ENCODE measurements at regions of chr10 and their contacts with region 1.

Region 1: DNA sequence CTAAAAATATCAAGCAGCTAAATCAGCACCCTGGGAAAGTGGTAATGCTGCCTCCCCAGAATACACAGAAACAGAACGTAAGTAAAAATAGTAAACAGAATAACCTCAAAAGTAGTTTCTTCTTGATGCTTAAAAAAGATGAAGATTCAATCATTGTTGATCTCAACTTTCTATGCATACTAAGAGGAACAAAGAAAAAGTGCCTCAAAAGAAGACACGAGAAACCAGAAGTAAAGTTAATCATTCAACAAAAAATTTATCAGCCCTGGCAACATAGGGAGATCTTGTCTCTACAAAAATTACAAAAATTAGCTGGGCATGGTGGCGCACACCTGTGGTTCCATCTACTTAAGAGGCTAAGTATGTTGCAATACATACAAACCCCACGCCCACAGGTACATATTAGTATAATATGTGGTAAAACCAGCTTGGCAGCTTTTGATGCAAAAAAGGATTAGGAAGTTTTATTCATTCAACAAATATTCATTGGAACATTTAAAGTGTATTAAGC is 153.7 kb downstream of the NRBF2 start:
- DNase-seq: no peak
- ATAC-seq: no peak
- H3K4me3 ChIP-seq: no peak overlapping the region
- H3K4me3 Mint-ChIP-seq: no peak overlapping the region
- H3K27ac ChIP-seq: no peak overlapping the region
- H3K27ac Mint-ChIP-seq: peak overlapping the region in 1 of 9 donors; percentile 10
- H3K4me1 ChIP-seq: no peaks in the 10 kb centered on the region
- H3K4me1 Mint-ChIP-seq: peaks cover 0 to 35% (median 17%) of the 10 kb centered on the region in 7 donors
- H3K27me3 ChIP-seq: no peaks in the 10 kb centered on the region
- H3K27me3 Mint-ChIP-seq: no peaks in the 10 kb centered on the region

Region 2: DNA sequence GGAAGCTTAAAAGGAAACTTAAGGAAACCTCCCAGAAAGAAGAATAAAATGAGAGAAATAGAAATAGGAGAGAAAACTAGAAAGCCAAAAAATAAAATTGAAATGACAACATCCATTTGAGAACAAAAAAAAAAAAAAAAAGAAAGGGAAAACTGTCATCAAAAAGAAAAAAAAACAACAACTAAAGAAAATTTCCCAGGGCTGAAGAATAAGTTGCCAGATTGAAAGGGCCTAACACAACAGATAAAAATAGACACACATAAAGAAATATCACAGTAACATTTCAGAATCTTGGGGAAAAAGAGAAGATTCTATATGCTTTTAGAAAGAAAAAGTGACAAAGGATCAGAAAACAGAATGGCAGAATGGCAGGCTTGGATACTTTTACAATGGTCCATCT is 21.8 kb after region 1 on chr10:
- CTCF ChIA-PET with region 1: no interaction called
- POLR2A ChIA-PET with region 1: no interaction called
- intact Hi-C with region 1: loop called in 1 of 2 experiments (anchors 2 kb)
- DNase-seq: no peak
- ATAC-seq: no peak
- H3K4me3 ChIP-seq: no peak overlapping the region
- H3K4me3 Mint-ChIP-seq: no peak overlapping the region
- H3K27ac ChIP-seq: no peak overlapping the region
- H3K27ac Mint-ChIP-seq: peak overlapping the region in 1 of 9 donors; percentile 25
- H3K4me1 ChIP-seq: no peaks in the 10 kb centered on the region
- H3K4me1 Mint-ChIP-seq: peaks cover 0 to 20% (median 10%) of the 10 kb centered on the region in 7 donors
- H3K27me3 ChIP-seq: no peaks in the 10 kb centered on the region
- H3K27me3 Mint-ChIP-seq: no peaks in the 10 kb centered on the region

Region 3: GRCh38 chr10:63346015-63346441 is 59.2 kb after region 1 on chr10:
- CTCF ChIA-PET with region 1: no interaction called
- POLR2A ChIA-PET with region 1: no interaction called
- intact Hi-C with region 1: loop called in 1 of 2 experiments (anchors 10 kb)
- DNase-seq: no peak
- ATAC-seq: no peak
- H3K4me3 ChIP-seq: no peak overlapping the region
- H3K4me3 Mint-ChIP-seq: no peak overlapping the region
- H3K27ac ChIP-seq: no peak overlapping the region
- H3K27ac Mint-ChIP-seq: no peak overlapping the region
- H3K4me1 ChIP-seq: no peaks in the 10 kb centered on the region
- H3K4me1 Mint-ChIP-seq: peaks cover 0 to 27% (median 8%) of the 10 kb centered on the region in 7 donors
- H3K27me3 ChIP-seq: no peaks in the 10 kb centered on the region
- H3K27me3 Mint-ChIP-seq: no peaks in the 10 kb centered on the region

Measured in naive thymus-derived CD4-positive, alpha-beta T cell (primary cell).